HEK293 (cell line): ENCODE measurements at regions of chr7 and their contacts with region 1.

Region 1: DNA sequence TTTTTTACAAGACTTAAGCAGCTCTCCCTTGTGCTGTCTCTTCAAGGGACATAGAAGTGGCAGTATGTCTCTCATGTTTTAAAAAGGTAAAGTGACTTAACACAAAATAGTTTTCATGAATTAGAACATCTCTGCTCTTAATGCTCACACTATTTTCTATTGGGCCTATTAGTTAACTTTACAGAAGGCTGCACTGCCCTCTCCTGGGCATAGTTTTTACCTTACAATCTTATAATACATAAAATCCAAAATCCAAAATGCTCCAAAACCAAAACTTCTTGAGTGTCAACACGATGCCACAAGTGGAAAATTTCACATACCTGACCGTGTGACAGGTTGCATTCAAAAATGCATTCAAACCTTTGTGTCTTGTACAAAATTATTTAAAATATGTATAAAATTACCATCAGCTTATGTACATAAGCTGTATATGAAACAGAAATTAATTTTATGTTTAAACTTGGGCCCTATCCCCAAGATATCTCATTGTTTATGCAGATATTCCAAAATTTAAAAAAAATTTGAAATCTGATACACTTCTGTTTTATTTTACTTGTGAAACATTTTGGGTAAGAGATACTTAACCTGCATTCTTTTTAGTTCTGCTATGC is 25.8 kb downstream of the TES start:
- H3K4me3 ChIP-seq: no peak overlapping the region
- H3K27ac ChIP-seq: no peak overlapping the region
- H3K4me1 ChIP-seq: peaks cover 4% of the 10 kb centered on the region
- CTCF ChIP-seq: no peak

Region 2: GRCh38 chr7:116167177-116167576 is 68.9 kb before region 1 on chr7:
- CTCF ChIA-PET with region 1: interaction called, 16 read pairs
- POLR2A ChIA-PET with region 1: no interaction called
- H3K4me3 ChIP-seq: no peak overlapping the region
- H3K27ac ChIP-seq: no peak overlapping the region
- H3K4me1 ChIP-seq: no peaks in the 10 kb centered on the region
- CTCF ChIP-seq: no peak

Region 3: GRCh38 chr7:116180302-116180701 is 55.8 kb before region 1 on chr7:
- CTCF ChIA-PET with region 1: interaction called, 131 read pairs
- POLR2A ChIA-PET with region 1: interaction called, 3 read pairs
- H3K4me3 ChIP-seq: no peak overlapping the region
- H3K27ac ChIP-seq: no peak overlapping the region
- H3K4me1 ChIP-seq: no peaks in the 10 kb centered on the region
- CTCF ChIP-seq: peak; percentile 38; the same call in 1 of the 2 replicates

Region 4: DNA sequence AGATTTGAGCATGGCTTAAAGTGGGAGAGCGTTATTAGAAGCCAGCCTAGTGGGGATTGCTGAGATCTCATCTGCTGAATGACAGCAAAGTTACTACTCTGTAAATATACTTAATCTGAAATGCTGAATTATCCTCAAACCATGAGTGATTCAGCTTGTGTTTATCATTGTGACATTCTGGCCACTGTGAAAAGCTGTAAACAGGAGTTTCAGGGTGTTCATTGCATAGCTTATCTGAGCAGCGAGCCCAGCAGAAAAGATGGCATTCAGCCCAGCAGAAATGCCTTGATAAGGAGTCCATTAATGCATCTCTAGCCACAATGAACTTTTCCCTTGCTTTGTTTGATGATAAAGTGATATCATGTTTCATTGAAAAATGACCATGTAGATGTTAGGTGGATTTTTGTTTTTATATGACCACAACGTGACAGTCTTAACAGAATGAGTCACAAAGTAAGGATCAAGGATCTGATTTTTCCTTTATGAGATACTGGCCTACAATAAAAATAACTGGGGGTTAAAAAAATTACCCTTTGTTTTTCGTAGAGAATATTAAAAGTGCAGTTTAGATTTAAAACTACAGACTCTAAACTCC is 18.0 kb before region 1 on chr7:
- CTCF ChIA-PET with region 1: interaction called, 10 read pairs
- POLR2A ChIA-PET with region 1: interaction called, 8 read pairs
- H3K4me3 ChIP-seq: no peak overlapping the region
- H3K27ac ChIP-seq: peak overlapping the region; percentile 67
- H3K4me1 ChIP-seq: peaks cover 44% of the 10 kb centered on the region
- CTCF ChIP-seq: no peak

Region 5: DNA sequence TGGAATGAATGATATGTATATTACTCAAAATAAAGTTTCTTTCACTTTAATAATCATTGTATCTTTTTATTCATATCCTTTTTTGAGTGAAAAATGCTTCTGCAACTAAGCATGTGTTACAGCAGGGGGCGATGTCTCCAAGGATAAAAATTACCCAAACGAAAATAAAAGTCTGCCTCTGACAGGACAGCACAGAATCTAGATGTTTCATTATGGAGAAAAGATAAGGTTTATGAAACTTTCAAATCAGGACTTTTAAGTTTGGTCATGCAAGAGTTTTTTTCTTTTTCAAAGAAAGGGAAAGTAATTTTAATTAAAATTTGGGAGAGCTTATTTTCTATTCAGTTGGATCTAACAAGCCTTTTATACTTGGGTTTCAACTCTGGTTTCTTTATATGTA is 22.6 kb after region 1 on chr7:
- CTCF ChIA-PET with region 1: interaction called, 15 read pairs
- POLR2A ChIA-PET with region 1: no interaction called
- H3K4me3 ChIP-seq: no peak overlapping the region
- H3K27ac ChIP-seq: no peak overlapping the region
- H3K4me1 ChIP-seq: no peaks in the 10 kb centered on the region
- CTCF ChIP-seq: 0 out of 2 replicates have a peak, but pooled peaks have one; percentile 44